HEK293 (cell line): ENCODE measurements at regions of chr14 and their contacts with region 1.

Region 1: DNA sequence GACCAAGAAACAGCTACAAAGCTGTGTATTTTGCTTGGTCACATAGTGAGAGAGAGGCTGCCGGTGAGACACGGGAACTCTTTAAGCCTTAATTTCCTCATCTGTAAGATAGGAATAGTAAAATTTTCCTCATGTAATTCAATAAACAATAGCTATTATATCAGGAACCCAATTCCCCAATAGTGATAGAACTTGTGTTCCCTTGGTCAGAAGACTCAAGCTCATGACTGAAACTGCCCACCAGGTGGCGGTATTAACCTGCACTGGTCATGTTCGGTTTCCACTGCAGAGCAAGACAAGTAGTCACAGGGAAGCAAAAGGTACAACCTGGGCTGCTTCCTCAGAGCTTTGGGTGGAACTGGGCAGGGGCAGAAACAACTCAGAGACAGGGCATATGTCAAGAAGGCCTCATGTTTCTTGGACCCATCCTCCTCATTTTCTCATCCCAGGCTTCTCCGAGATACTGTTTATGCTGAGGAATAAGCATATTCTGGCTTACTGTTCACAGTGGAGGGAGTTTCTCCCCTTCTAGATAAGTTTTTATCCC is 4.2 kb upstream of the AJUBA start:
- H3K4me3 ChIP-seq: no peak overlapping the region
- H3K27ac ChIP-seq: no peak overlapping the region
- H3K4me1 ChIP-seq: peaks cover 4% of the 10 kb centered on the region
- CTCF ChIP-seq: peak; percentile 77; the same call in 1 of the 2 replicates

Region 2: GRCh38 chr14:22878271-22879246 is 108.0 kb before region 1 on chr14:
- CTCF ChIA-PET with region 1: no interaction called
- POLR2A ChIA-PET with region 1: no interaction called
- H3K4me3 ChIP-seq: no peak overlapping the region
- H3K27ac ChIP-seq: no peak overlapping the region
- H3K4me1 ChIP-seq: peaks cover 4% of the 10 kb centered on the region
- CTCF ChIP-seq: no peak

Region 3: DNA sequence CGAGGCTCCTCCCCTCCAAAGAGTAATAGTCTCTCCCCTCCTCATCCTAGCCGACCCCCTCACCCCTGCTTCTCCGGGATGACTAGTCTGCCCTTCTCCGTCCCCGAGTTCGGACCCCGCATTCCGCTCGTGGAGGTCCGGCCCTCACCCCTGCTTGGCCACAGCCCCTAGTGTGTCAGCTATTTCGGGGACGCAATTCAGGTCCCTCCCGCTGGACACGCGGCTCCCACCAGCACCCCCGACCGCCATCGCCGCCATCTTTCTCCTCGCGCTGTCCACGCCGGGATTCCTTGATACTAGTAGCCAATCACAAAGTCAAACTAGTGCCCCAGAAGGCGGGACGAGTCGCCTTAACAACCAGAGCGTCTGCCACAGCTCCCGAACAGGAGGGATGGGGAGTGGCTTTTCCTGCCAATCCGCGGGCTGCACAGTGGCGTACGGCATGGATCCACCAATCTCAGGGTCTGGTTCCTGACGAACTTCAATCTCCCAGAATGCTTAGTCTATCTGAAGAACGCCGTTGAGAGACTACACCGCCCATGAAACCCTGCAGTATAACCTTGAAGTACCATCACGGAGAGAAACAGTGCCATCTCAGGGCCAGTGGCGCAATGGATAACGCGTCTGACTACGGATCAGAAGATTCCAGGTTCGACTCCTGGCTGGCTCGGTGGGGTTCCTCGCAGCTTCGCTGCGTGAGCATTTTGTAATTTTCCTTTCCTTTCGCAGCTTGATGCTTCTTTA is 57.3 kb before region 1 on chr14 and contains the start of gene PRMT5:
- CTCF ChIA-PET with region 1: interaction called, 27 read pairs
- POLR2A ChIA-PET with region 1: interaction called, 26 read pairs
- H3K4me3 ChIP-seq: peak within 1 kb of the TSS; percentile 78
- H3K27ac ChIP-seq: peak within 1 kb of the TSS; percentile 55; the same call in 1 of the 2 replicates
- H3K4me1 ChIP-seq: no peaks in the 10 kb centered on the region
- CTCF ChIP-seq: no peak

Region 4: DNA sequence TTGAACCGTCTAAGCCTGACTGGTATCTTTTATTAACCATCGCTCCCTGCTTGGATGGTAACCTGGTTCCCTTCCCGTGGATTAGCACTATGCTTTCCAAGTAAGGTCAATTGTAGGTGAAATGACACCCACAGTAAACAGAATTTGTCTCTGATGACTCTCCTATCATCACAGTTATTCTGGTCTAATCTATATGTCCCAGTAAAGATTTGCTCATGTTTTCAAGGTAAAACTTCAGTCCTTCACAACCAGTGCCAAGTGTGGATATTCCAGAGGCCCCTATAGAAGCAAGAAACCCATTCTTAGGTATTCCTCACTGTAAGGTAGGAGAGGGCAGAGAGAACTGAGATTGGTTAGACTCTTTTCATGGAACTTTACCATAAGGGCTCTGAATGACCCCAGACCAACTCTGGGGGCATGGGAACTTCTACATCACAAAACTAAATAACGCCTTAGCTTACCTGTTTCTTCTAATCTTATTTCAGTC is 19.8 kb before region 1 on chr14:
- CTCF ChIA-PET with region 1: interaction called, 227 read pairs
- POLR2A ChIA-PET with region 1: interaction called, 31 read pairs
- H3K4me3 ChIP-seq: no peak overlapping the region
- H3K27ac ChIP-seq: no peak overlapping the region
- H3K4me1 ChIP-seq: peaks cover 5% of the 10 kb centered on the region; the same call in 1 of the 2 replicates
- CTCF ChIP-seq: no peak

Region 5: GRCh38 chr14:23006544-23007419 is 20.2 kb after region 1 on chr14:
- CTCF ChIA-PET with region 1: interaction called, 53 read pairs
- POLR2A ChIA-PET with region 1: interaction called, 28 read pairs
- H3K4me3 ChIP-seq: peak overlapping the region; percentile 52
- H3K27ac ChIP-seq: peak overlapping the region; percentile 91
- H3K4me1 ChIP-seq: peaks cover 8% of the 10 kb centered on the region; the same call in 1 of the 2 replicates
- CTCF ChIP-seq: peak; percentile 85

Region 6: DNA sequence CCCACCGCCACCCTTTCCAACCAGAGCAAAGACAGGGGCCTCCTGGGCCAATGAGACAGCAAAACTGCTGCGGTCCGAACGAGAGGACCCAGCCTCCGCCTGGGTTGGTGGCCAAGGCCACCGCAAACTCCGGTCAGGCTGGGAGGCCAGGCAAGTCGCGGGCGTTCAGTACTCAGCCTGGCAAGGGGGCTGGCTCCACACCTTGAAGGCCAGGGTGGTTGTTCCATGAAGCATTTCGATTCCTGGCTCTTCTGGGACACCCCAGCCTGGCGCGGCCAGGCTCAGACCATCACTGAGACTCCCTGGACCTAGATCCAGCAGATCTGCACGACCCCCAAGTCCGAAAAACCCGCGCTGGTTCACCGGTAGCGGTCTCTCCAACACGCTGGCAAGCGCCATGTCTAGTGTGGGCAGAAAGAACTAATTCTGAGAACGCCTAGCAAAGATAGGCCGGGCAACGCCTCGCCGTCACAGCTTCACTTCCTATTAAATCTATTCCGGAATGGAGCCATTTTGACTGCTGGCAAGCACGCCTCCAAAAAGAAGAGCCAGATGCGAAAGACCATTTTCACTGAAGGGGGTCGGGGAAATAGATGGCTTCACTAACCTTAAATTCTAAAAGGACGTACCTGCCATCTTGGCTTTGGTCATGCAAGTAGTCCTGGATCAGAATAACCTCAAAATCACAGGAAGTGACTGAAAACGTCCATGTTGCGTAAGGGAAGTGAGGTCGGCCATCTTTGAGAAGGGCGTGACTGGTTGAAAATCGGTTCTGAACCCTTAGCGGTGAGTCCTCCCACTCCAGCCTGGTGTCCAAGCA is 48.1 kb after region 1 on chr14 and contains the start of gene PSMB5:
- CTCF ChIA-PET with region 1: interaction called, 15 read pairs
- POLR2A ChIA-PET with region 1: no interaction called
- H3K4me3 ChIP-seq: peak within 1 kb of the TSS; percentile 68
- H3K27ac ChIP-seq: peak within 1 kb of the TSS; percentile 89
- H3K4me1 ChIP-seq: no peaks in the 10 kb centered on the region
- CTCF ChIP-seq: no peak

Region 7: DNA sequence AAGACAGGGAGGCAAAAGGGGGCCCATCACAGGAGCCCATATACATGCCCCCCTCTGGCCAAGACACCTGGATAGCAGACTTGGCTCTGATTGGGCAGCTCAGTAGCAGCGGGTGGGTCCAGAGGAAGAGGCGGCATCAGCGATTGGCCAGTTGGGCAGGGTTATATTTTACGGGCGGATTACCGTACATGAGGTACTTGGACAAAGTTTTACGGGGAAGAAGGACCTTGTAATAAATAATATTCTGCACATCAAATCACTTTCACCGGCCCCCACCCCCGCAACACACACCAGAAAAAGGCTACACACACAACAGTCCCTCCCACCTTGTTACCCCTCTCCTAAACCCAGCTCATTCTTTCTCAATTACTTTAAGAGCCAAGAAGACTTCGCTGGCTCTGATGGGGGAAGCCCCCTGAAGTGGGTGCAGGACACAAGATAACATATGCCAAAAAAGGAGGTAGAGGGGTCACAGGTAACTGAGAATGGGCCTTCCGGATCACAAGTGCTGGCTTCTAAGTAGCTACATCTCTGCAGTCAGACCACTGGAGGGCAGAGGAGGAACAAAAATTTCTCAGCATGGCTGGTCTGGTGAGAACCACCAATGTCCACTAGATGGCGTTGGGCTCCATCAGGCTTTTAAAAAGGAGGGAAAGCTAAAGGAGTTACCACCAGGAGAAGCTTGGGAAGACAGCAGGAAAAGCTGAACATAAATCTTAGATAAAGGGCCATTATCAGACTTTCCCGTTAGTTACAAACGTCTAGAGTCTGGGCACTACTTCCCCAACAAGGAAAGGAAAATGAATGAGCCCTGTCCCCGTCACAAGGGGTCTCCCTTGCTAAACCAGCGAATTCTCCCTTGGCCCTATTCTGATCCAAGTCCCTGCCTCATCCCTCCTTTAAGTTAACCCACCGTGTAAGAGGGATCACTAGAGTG is 82.2 kb after region 1 on chr14:
- CTCF ChIA-PET with region 1: interaction called, 469 read pairs
- POLR2A ChIA-PET with region 1: interaction called, 12 read pairs
- H3K4me3 ChIP-seq: 0 out of 2 replicates have a peak overlapping the region, but pooled peaks have one; percentile 5
- H3K27ac ChIP-seq: peak overlapping the region; percentile 66
- H3K4me1 ChIP-seq: peaks cover 16% of the 10 kb centered on the region
- CTCF ChIP-seq: peak; percentile 95

Region 8: DNA sequence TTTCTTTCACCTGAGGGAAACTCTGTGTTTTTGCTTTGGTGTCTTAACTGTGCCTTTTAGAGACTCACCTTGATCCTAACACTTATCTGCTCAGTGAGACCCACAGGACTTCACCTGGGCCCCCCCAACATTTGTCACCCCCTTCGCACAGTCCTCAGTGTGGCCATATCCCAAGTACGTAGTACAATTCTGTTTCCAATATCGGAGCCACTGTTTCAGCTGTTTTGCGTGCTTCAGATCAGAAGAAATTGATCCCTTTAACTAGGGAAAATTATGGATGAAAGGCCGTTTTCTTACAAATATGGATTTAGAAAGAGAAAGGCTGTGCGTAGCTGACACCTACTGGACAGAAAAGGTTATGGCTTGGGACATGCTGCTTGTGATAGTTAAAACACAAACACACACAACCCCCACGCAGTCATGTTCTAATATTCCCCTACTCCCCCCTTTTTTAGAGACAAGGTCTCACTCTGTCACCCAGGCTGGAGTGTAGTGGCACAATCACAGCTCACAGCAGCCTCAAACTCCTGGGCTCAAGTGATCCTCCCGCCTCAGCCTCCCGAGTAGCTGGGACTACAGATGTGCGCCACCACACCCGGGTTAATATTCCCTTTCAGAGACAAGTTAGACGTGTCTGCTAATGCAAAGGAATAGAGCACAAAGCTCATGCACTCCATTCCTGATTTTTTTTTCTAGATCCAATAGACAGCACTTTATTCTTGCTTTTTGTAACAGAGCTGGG is 200.5 kb after region 1 on chr14:
- CTCF ChIA-PET with region 1: interaction called, 10 read pairs
- POLR2A ChIA-PET with region 1: no interaction called
- H3K4me3 ChIP-seq: no peak overlapping the region
- H3K27ac ChIP-seq: no peak overlapping the region
- H3K4me1 ChIP-seq: no peaks in the 10 kb centered on the region; the same call in 1 of the 2 replicates
- CTCF ChIP-seq: 0 out of 2 replicates have a peak, but pooled peaks have one; percentile 39